Activated CD4-positive, alpha-beta memory T cell treated with anti-CD3 and anti-CD28 coated beads for 36 hours (primary cell): ENCODE measurements at regions of chr6 and their contacts with region 1.

Region 1: DNA sequence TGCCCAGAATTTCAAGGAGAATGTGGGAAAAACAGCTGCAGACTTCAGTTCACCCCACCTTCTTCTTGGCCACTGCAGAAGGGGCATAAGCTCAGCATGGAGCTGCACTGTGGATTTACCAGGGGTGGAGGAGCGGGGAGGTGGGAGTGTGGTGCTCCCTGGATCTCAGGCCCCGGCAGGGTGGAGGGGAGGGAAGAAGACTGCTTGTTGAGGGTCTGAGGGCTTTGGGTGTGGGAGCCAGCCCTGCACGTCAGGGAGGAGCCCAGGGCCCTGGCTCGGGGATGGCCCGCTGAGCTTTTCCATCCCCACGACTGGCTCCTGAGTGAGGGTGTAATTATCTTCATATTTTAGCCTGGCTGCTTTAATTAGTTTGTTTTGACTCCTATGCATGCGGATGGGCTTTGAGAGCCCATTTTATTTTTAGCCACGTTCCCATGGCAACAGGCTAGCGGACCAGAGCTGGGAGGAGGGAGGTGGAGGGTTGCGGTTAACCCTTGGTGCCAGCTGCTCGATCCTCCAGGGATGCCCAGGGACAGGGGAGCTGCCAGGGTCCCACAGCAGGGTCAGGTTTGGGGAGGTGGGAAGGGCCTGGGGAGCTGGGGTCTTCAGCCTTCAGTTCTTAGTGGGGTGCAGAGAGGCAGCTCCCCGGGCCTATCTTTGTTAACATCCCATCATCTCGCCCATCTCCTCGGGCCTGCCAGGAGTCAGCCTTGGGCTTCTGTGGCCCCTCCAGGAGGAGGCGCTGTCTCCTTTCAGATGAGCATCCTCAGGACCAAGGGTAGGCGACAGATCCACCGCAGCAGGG is 68.2 kb downstream of the RAB44 start:
- DNase-seq: peak; percentile 89
- H3K4me3 Mint-ChIP-seq: no peak overlapping the region
- H3K27ac Mint-ChIP-seq: no peak overlapping the region
- H3K4me1 Mint-ChIP-seq: peaks cover 25% of the 10 kb centered on the region
- H3K27me3 Mint-ChIP-seq: no peaks in the 10 kb centered on the region

Region 2: DNA sequence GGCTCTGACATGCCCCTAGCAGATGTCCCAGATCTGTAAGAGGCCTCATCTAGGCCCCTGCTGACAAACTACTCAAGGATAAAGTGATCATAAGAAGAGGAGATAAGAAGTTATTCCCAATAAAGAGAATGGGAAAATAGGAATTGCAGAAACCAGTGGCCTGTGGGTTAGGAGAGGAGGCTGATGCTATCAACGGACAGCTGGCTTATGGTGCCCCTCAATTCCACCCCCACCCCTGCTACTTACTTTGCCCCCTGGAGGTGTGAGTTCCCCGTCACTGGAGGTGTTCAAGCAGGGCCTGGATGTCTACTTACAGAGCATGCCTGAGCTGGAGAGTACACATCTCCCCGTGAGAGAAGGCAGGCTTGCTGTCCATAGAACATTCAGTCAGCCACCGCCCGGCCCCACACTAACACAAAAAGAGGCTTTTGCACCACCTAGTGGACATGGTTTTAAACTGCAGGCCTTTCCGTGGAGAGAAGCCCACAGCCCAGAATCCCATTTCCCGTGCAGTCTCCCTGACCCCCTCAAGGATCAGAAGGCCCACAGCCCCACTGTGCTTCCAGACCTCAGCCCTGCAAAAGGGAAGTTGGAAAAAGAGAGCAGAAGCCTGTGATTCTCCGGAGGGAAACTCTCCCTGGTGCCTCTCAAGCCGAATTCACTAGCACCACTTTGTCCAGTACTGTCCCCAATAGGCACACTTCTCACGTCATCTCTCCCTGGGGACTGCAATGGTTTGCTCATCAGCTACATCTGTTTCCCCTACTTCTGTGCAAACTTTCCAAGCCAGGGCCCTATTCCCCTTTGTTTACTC is 405.3 kb before region 1 on chr6:
- CTCF ChIA-PET with region 1: no interaction called
- POLR2A ChIA-PET with region 1: no interaction called
- intact Hi-C with region 1: no loop called
- DNase-seq: peak; percentile 79
- H3K4me3 Mint-ChIP-seq: no peak overlapping the region
- H3K27ac Mint-ChIP-seq: no peak overlapping the region
- H3K4me1 Mint-ChIP-seq: peaks cover 24% of the 10 kb centered on the region
- H3K27me3 Mint-ChIP-seq: peaks cover 3% of the 10 kb centered on the region

Region 3: GRCh38 chr6:36615018-36615761 is 150.6 kb before region 1 on chr6:
- CTCF ChIA-PET with region 1: interaction called, 96 read pairs
- POLR2A ChIA-PET with region 1: no interaction called
- intact Hi-C with region 1: no loop called
- DNase-seq: peak; percentile 70
- H3K4me3 Mint-ChIP-seq: no peak overlapping the region
- H3K27ac Mint-ChIP-seq: peak overlapping the region; percentile 66
- H3K4me1 Mint-ChIP-seq: peaks cover 18% of the 10 kb centered on the region
- H3K27me3 Mint-ChIP-seq: no peaks in the 10 kb centered on the region

Region 4: GRCh38 chr6:36633915-36634314 is 131.9 kb before region 1 on chr6:
- CTCF ChIA-PET with region 1: no interaction called
- POLR2A ChIA-PET with region 1: no interaction called
- intact Hi-C with region 1: no loop called
- DNase-seq: no peak
- H3K4me3 Mint-ChIP-seq: no peak overlapping the region
- H3K27ac Mint-ChIP-seq: no peak overlapping the region
- H3K4me1 Mint-ChIP-seq: no peaks in the 10 kb centered on the region
- H3K27me3 Mint-ChIP-seq: no peaks in the 10 kb centered on the region

Region 5: GRCh38 chr6:36740818-36741179 is 25.0 kb before region 1 on chr6:
- CTCF ChIA-PET with region 1: no interaction called
- POLR2A ChIA-PET with region 1: no interaction called
- intact Hi-C with region 1: no loop called
- DNase-seq: no peak
- H3K4me3 Mint-ChIP-seq: no peak overlapping the region
- H3K27ac Mint-ChIP-seq: no peak overlapping the region
- H3K4me1 Mint-ChIP-seq: peaks cover 10% of the 10 kb centered on the region
- H3K27me3 Mint-ChIP-seq: no peaks in the 10 kb centered on the region

Region 6: DNA sequence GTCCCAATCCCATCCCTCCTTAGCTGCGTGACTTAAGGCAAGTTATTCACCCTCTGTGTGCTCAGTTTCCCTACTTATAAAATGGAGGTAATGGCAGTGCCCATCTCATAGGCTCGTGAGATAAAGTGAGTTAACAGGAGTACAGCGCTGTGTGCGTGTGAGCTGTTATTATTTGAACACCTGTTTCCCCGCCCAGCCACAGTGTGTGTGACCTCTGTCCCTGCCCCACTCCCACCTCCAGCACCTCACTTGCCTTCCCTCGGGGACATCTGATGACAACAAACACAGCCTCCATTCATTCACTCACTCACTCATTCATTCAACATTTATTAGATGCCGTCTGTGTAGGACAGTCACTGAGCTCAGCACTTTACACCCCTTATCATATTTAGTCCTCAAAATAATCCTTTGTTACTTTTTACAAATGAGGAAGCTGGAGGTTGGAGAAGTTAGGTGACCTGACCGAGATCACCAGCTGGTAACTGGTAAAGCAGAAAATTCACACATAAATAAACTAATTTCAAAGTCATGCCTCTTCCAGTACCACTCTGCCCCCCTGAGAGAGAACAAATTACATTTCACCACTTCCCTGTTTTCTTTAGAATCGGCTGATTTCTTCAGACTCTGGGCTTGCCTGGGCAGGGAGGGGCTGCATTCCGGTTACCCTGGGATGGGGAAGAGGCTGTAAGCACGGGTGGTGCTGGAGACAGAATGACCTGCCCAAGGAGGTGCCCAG is 14.8 kb after region 1 on chr6:
- CTCF ChIA-PET with region 1: interaction called, 345 read pairs
- POLR2A ChIA-PET with region 1: interaction called, 6 read pairs
- intact Hi-C with region 1: loop called (anchors 1 kb)
- DNase-seq: no peak
- H3K4me3 Mint-ChIP-seq: no peak overlapping the region
- H3K27ac Mint-ChIP-seq: no peak overlapping the region
- H3K4me1 Mint-ChIP-seq: peaks cover 2% of the 10 kb centered on the region
- H3K27me3 Mint-ChIP-seq: no peaks in the 10 kb centered on the region

Region 7: GRCh38 chr6:36788768-36789167 is 23.0 kb after region 1 on chr6:
- CTCF ChIA-PET with region 1: interaction called, 345 read pairs
- POLR2A ChIA-PET with region 1: interaction called, 6 read pairs
- intact Hi-C with region 1: no loop called
- DNase-seq: peak; percentile 65
- H3K4me3 Mint-ChIP-seq: no peak overlapping the region
- H3K27ac Mint-ChIP-seq: no peak overlapping the region
- H3K4me1 Mint-ChIP-seq: peaks cover 5% of the 10 kb centered on the region
- H3K27me3 Mint-ChIP-seq: peaks cover 5% of the 10 kb centered on the region

Region 8: DNA sequence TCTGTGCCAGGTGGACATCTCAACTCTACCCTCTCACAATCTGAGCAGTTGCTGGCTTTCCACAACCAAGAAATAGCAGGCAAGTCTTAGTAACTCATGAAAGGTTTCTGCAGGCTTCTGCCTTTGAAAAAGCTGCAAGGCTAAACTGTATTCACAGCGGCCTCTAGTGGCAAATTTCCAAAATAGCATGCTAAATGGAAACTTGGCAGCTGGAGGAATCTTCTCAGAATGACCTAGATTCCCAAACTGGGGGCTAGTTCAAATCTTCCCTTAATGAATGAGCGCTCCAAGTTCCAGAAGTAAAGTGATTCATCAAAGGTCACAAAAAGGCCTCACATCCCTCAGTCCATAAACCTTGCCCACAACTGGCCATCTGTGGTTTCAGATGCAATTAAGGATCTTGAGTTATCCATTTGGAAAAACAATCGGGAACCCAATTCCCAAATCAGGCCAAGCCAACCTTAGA is 85.4 kb after region 1 on chr6:
- CTCF ChIA-PET with region 1: interaction called, 74 read pairs
- POLR2A ChIA-PET with region 1: no interaction called
- intact Hi-C with region 1: loop called (anchors 1 kb)
- DNase-seq: peak; percentile 34
- H3K4me3 Mint-ChIP-seq: no peak overlapping the region
- H3K27ac Mint-ChIP-seq: no peak overlapping the region
- H3K4me1 Mint-ChIP-seq: no peaks in the 10 kb centered on the region
- H3K27me3 Mint-ChIP-seq: no peaks in the 10 kb centered on the region

Region 9: DNA sequence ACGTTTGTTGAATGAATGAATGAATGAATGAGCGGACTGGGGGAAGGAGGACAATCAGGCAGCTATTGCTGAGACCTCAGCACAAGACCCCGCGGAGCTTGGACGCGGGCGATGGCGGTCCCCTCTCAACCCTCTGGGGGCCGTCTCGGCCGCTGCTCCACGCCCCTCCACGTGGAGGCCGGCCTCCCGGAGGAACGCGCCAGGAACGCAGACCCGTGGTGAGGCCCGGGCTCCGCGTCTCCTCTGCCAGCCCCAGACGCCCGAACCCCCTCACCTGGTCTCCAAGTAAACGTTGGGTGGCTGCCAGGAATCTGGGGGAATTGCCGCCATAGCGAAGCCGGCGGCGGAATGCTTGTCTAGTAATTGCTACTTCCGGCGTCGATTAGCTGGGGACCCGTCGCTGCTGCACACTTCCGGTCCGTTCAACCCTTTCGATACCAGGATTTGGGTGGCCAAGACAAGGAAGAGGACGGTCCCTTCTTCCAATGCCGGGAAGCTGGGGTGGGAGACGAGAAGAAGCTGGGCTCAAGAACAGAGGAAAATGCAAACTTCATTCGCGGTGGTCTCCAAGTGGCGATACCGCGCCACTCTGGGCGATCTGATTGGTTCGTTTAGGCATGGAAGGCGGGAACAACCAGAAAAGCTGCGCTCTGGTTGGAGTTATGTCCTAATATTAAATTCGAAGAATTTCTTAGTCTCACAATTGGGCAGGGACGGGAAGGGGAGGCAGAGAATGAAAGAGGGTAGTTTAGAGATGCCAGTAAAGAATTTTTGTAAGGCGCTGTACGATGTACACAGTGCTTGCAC is 108.8 kb after region 1 on chr6 and contains the start of gene PPIL1:
- CTCF ChIA-PET with region 1: interaction called, 33 read pairs
- POLR2A ChIA-PET with region 1: no interaction called
- intact Hi-C with region 1: no loop called
- DNase-seq: peak; percentile 88
- H3K4me3 Mint-ChIP-seq: peak within 1 kb of the TSS; percentile 98
- H3K27ac Mint-ChIP-seq: peak within 1 kb of the TSS; percentile 99
- H3K4me1 Mint-ChIP-seq: peaks cover 40% of the 10 kb centered on the region
- H3K27me3 Mint-ChIP-seq: peaks cover 2% of the 10 kb centered on the region
- total RNA-seq, gene PPIL1: 38.5 to 40.6 TPM

Region 10: GRCh38 chr6:37207903-37208456 is 442.2 kb after region 1 on chr6:
- CTCF ChIA-PET with region 1: interaction called, 11 read pairs
- POLR2A ChIA-PET with region 1: no interaction called
- intact Hi-C with region 1: no loop called
- DNase-seq: peak; percentile 95
- H3K4me3 Mint-ChIP-seq: no peak overlapping the region
- H3K27ac Mint-ChIP-seq: peak overlapping the region; percentile 69
- H3K4me1 Mint-ChIP-seq: peaks cover 63% of the 10 kb centered on the region
- H3K27me3 Mint-ChIP-seq: no peaks in the 10 kb centered on the region